Cardiac septum (tissue), 1 donor: ENCODE measurements at regions of chr5 and their contacts with region 1.

Region 1: DNA sequence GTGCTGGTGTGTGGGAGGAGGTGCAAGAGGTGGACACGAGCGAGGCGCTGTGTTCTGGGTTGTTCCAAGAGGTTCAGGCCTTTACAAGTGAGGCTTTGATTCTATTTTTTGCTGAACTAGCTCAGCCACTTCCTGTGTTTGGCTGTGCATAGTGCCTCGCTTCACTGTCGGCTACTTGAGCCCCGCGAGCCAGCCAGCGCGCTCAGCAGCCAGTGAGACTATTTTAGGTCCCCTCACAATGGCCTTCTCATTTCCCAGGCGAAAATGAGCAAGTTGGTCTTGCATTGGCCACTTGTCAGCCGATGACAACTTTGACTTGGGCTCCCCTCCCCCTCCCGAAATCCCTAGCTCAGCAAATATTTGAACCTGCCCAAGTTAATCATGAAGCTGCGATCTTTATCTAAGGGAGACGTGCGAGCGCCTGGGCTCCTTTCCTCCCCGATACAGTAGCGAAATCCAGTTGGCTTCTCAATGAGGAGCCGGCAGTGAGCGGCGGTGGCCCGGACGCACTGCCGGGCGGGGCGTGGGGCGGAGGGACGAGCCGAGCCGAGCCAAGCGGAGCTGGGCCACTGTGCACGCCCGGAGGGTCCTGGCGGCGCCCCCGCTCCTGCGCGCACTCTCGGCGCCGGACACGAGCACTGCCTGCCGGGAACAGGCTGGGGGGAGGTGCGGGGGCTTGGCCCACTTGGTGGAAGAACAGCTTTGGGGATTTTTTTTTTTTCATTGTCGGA is 72.6 kb downstream of the PIK3R1 start:
- DNase-seq: peak; percentile 86

Region 2: GRCh38 chr5:68251804-68252522 is 36.2 kb before region 1 on chr5:
- intact Hi-C with region 1: no loop called
- DNase-seq: no peak

Region 3: GRCh38 chr5:68264024-68264956 is 23.9 kb before region 1 on chr5:
- intact Hi-C with region 1: loop called (anchors 2 kb)
- DNase-seq: no peak

Region 4: GRCh38 chr5:68433923-68434879 is 146.1 kb after region 1 on chr5:
- intact Hi-C with region 1: loop called (anchors 1 kb)
- DNase-seq: peak; percentile 96

Region 5: DNA sequence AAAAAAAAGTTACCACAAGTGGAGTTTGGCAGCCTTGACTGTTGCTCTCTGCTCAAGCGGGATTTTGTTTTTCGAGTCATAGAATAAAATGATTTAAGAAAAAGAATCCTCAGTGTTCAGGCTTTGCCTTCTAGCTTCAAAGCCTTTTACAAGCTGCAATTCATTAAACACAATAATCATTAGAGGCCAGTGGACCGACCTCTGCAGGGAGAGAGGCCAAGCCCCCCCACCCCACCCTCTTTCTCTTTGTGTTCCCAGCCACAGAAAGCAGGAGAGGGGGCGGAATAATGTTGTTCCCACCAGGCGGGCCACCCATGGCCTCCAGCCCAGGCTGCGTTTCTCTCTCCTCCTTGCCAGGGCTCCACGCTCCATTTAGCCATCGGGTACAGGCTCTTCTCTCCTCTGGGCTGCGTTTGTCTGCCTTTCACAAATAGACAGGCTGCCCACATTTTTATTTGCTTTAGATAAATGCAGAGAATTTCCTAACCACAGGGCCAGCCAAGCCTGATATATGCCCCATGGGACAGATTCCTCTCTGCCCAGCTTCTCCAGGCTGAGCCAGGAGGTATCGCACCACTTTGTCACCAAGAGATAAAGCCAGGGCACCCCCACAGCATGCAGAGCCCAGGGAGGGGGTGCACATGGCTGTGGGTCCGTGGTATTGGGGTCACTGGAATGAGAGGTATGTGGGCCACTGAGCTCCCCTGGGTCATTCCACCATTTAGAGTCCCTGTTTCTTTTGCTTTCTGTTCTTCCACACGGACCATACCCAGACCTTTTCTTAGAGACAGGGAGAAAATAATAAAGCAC is 246.2 kb after region 1 on chr5:
- intact Hi-C with region 1: loop called (anchors 10 kb)
- DNase-seq: no peak

Region 6: GRCh38 chr5:68730359-68731300 is 442.5 kb after region 1 on chr5:
- intact Hi-C with region 1: loop called (anchors 2 kb)
- DNase-seq: no peak

Region 7: GRCh38 chr5:69007726-69008368 is 719.7 kb after region 1 on chr5:
- intact Hi-C with region 1: loop called (anchors 5 kb)
- DNase-seq: no peak